ENCODE measurements at regions of chr1 and their contacts with region 1.

Region 1: DNA sequence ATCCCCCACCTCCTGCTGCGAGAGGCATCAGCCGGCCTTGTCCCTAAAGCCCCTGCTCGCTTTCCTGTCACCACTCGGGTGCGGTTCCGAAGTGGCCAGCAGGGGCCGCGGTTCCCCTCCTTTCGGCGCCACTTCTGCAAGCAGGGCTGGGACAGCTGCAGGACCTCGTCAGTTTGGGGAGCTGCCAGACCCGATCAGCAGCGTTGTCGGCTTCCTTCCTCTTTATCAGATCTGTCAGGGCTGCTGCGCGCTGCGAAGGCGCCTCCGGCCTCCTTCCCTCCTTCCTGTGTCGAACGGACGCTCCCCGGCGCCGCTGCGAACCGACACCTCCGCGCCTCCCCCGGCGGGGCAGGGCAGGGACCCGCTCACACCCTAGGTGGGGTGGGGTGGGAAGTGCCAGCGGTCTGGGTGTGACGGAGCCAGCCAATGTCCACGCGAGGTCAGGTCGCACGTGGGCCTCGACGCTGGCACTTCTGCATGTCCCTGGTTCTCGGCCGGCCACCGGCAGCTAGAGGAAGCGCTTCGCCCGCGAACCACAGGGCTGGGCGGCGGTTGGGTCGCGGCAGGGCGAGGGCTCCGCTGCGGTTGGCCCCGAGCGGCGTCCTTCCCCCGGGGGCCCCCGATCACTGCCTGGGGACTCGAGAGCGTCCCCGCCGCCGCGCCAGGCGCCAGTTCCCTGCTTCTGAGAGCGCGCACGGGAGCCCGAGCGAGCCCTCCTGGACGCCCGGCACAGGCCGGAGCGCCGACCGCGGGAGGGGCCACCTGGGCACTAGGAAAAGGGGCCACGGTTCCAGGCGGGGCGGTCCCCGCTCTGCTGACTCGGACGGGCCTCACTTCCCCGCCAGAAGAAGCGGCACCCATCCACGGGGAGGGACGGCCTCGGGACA is 81.8 kb downstream of the RUNX3 start:
- DNase-seq: peak; percentile 98

Region 2: GRCh38 chr1:24635195-24635843 is 212.9 kb before region 1 on chr1:
- in situ Hi-C with region 1: no loop called
- DNase-seq: peak; percentile 61

Region 3: DNA sequence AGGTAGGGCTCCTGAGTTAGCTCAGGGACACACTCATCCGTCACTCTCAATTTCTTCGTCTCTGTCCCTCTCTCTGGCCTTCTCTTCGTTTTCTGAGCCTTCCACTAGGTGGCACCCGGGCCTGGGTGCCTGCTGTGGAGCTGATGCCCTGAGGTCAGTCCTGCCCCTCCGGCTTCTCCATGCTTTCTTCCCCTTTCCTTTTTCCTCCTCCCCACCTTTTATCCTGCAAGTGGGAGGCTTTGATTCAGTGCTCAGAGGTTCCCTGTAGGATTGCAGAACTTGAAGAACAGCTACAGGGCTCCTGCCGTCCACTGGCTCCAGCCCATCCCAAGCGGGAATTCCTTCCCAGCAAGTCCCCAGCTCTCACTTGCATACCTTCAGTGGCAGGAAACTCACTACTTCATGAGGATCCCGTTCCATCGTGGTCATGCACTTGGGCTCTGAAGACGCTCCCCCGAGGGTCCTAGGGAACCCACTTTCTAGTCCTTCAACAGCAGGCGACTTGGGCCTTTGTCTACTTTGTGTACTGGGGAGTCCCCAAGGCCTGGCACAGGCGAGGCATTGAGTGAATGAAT is 159.5 kb before region 1 on chr1:
- in situ Hi-C with region 1: loop called (anchors 25 kb)
- DNase-seq: peak; percentile 83